ENCODE measurements at regions of chr11 and their contacts with region 1.

Region 1: GRCh38 chr11:8225589-8226036 is 38.1 kb downstream of the LMO1 start:
- DNase-seq: peak; percentile 63 to 91
- H3K4me3 ChIP-seq: no peak overlapping the region
- H3K4me1 ChIP-seq: peaks cover 4% of the 10 kb centered on the region
- H3K27me3 ChIP-seq: no peaks in the 10 kb centered on the region

Region 2: GRCh38 chr11:8566613-8567210 is 341.1 kb after region 1 on chr11:
- in situ Hi-C with region 1: loop called (anchors 5 kb)
- DNase-seq: peak; percentile 46 to 66
- H3K4me3 ChIP-seq: no peak overlapping the region
- H3K4me1 ChIP-seq: peaks cover 2% of the 10 kb centered on the region; the same call in 1 of the 2 replicates
- H3K27me3 ChIP-seq: no peaks in the 10 kb centered on the region